Right ventricle myocardium inferior (tissue), 1 donor: ENCODE measurements at regions of chr17 and their contacts with region 1.

Region 1: GRCh38 chr17:35747540-35748017 is 5.5 kb downstream of the GAS2L2 start:
- DNase-seq: peak; percentile 74
- ATAC-seq: peak; percentile 83

Region 2: DNA sequence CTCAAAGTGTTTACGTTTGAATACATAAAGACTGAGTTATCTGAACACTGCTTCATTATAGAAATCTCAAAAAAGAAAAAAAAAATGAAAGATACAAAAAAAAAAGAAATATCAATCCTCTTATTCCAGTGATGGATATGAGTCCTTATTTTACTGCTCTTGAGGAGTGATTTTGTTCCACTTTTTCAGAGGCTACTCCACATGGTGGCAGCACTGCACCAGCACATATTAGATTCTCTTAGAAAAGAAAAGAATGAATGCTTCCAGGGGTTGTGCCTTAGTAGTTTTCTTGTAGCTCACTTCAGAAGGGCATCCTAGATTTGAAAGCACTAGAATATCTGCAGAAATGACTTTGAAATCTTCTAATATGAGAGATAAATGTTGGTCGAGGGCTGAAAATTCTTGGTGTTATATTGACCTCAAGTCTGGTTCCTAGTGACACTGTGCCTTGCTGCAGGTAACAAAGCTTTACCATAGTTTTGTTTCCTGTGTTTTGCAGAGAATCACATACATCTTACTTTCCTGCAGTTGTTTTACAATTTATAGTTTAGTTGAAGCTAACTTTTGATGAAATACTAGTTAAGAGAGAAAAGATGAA is 134.6 kb before region 1 on chr17:
- intact Hi-C with region 1: loop called (anchors 2 kb)
- DNase-seq: no peak
- ATAC-seq: no peak

Region 3: GRCh38 chr17:35660902-35661301 is 86.7 kb before region 1 on chr17:
- intact Hi-C with region 1: loop called (anchors 2 kb)
- DNase-seq: no peak
- ATAC-seq: peak; percentile 86

Region 4: DNA sequence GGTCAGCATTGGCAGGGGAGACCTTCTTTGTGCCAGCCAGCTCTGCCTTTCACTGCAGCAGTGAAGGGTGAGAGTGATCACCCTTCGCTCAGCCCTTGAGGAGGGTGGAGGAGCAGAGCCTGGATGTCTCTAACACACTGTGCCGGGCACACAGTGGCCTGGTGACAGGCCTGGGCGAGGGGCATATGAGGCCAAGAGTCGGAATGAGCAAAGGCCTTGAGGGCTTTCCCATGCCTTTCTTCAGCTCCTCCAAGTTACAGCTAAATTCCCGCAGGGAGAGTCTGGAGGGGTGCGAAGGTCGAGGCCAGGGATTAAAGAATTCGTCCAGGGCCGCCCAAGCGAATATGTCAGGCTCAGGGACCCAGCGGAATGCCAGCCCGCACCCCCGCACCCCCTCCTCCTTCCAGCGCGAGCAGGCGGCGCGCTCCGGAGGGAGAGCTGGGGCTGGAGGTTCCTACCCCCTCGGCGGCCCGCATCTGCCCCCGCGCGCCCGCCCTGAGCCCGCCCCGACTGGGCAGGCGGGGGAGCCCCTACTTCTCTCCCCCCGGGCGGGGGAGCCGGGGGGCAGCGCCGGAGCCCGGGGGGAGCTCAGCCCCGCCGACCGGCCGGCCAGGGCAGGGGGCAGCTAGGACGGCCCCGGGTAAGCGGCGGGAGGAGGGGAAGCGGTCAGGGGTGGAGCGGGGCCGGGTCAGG is 16.2 kb before region 1 on chr17 and contains the start of gene RASL10B:
- intact Hi-C with region 1: no loop called
- DNase-seq: no peak
- ATAC-seq: peak; percentile 79
- total RNA-seq, gene RASL10B: 18.9 TPM